ENCODE measurements at regions of chr10 and their contacts with region 1.

Region 1: DNA sequence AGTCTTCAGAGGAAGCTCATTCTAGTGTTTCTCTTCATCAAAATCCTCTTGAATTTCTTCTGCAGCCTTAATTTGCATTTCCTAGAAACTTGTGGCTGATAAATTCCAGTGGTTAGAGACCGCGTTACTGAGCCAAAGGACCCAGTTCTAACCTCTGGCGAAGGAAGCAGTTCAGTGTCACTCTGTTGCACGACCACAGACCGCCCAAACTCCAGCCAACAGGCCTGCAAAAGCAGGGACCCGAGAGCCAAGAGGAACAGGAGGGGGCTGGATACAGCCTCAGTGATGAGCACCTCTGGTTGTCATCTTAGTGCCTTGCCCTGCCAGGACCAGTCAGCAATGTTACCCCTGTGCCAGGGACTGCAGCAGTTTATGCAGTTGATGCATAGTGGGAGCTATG is 70.0 kb downstream of the AFAP1L2 start:
- DNase-seq: no peak
- ATAC-seq: peak in 1 of 4 donors; percentile 44
- H3K4me3 ChIP-seq: no peak overlapping the region
- H3K27ac ChIP-seq: no peak overlapping the region
- H3K4me1 ChIP-seq: peaks cover 15% of the 10 kb centered on the region
- H3K27me3 ChIP-seq: no peaks in the 10 kb centered on the region
- CTCF ChIP-seq: no peak

Region 2: GRCh38 chr10:115790220-115790619 is 1455.9 kb after region 1 on chr10:
- intact Hi-C with region 1: loop called in 1 of 2 experiments (anchors 5 kb)
- DNase-seq: no peak
- ATAC-seq: no peak
- H3K4me3 ChIP-seq: no peak overlapping the region
- H3K27ac ChIP-seq: no peak overlapping the region
- H3K4me1 ChIP-seq: no peaks in the 10 kb centered on the region
- H3K27me3 ChIP-seq: no peaks in the 10 kb centered on the region
- CTCF ChIP-seq: no peak

Measured in psoas muscle (tissue), 8 donors.